ENCODE measurements at regions of chr18 and their contacts with region 1.

Region 1: GRCh38 chr18:36572135-36572856 is 256.5 kb downstream of the TPGS2 start:
- DNase-seq: peak; percentile 38
- ATAC-seq: peak; percentile 87
- H3K4me3 ChIP-seq: no peak overlapping the region
- H3K27ac ChIP-seq: no peak overlapping the region
- H3K4me1 ChIP-seq: no peaks in the 10 kb centered on the region
- H3K27me3 ChIP-seq: no peaks in the 10 kb centered on the region
- CTCF ChIP-seq: peak; percentile 55 to 74 (median 55)
- EP300 ChIP-seq: no peak
- POLR2A ChIP-seq: no peak
- RAD21 ChIP-seq: peak; percentile 76

Region 2: GRCh38 chr18:36095936-36096519 is 476.3 kb before region 1 on chr18:
- CTCF ChIA-PET with region 1: interaction called, 10 read pairs
- POLR2A ChIA-PET with region 1: no interaction called
- RAD21 ChIA-PET with region 1: interaction called, 17 read pairs
- SMC1A ChIA-PET with region 1: interaction called, 17 read pairs
- in situ Hi-C with region 1: loop called (anchors 10 kb)
- intact Hi-C with region 1: loop called (anchors 10 kb)
- DNase-seq: no peak
- ATAC-seq: peak; percentile 76
- H3K4me3 ChIP-seq: no peak overlapping the region
- H3K27ac ChIP-seq: no peak overlapping the region
- H3K4me1 ChIP-seq: no peaks in the 10 kb centered on the region
- H3K27me3 ChIP-seq: no peaks in the 10 kb centered on the region
- CTCF ChIP-seq: peak; percentile 33 to 67 (median 36); a peak in 4 of 6 replicates
- EP300 ChIP-seq: no peak
- POLR2A ChIP-seq: no peak
- RAD21 ChIP-seq: peak; percentile 83

Region 3: DNA sequence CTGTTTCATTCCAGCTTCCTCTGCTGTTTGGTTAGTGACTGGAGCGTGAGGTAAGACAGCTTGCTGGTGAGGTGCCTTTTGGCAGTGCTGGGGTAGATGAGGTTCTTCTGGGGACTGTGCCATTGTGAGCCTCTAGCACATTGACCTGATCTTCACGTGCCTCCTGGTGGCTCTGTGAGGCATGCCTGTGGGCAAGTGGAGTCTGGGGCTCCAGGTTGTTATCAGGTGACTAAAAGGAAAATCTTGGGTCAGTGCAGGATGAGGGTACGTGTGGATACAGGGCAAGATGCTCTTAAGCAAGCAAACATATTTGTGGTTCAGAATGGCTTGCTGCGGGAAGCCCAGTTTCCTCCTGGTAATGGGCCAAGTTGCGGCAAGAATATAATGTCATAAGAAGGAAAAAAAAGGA is 199.4 kb before region 1 on chr18:
- CTCF ChIA-PET with region 1: interaction called, 13 read pairs
- POLR2A ChIA-PET with region 1: interaction called, 3 read pairs
- RAD21 ChIA-PET with region 1: interaction called, 6 read pairs
- SMC1A ChIA-PET with region 1: interaction called, 32 read pairs
- in situ Hi-C with region 1: no loop called
- intact Hi-C with region 1: no loop called
- DNase-seq: no peak
- ATAC-seq: peak; percentile 57
- H3K4me3 ChIP-seq: no peak overlapping the region
- H3K27ac ChIP-seq: no peak overlapping the region
- H3K4me1 ChIP-seq: no peaks in the 10 kb centered on the region; the same call in 1 of the 2 replicates
- H3K27me3 ChIP-seq: no peaks in the 10 kb centered on the region
- CTCF ChIP-seq: peak; percentile 16 to 33 (median 32); a peak in 3 of 6 replicates
- EP300 ChIP-seq: no peak
- POLR2A ChIP-seq: no peak
- RAD21 ChIP-seq: peak; percentile 53; the same call in 1 of the 2 replicates

Region 4: GRCh38 chr18:36441426-36442240 is 130.7 kb before region 1 on chr18:
- CTCF ChIA-PET with region 1: interaction called, 27 read pairs
- POLR2A ChIA-PET with region 1: interaction called, 3 read pairs
- RAD21 ChIA-PET with region 1: interaction called, 5 read pairs
- SMC1A ChIA-PET with region 1: interaction called, 9 read pairs
- in situ Hi-C with region 1: no loop called
- intact Hi-C with region 1: no loop called
- DNase-seq: no peak
- ATAC-seq: peak; percentile 10; the same call in 2 of the 3 replicates
- H3K4me3 ChIP-seq: no peak overlapping the region
- H3K27ac ChIP-seq: no peak overlapping the region
- H3K4me1 ChIP-seq: no peaks in the 10 kb centered on the region
- H3K27me3 ChIP-seq: no peaks in the 10 kb centered on the region
- CTCF ChIP-seq: no peak
- EP300 ChIP-seq: peak in 1 of 2 experiments; percentile 16; a peak in 1 of 4 replicates
- POLR2A ChIP-seq: no peak
- RAD21 ChIP-seq: no peak

Region 5: DNA sequence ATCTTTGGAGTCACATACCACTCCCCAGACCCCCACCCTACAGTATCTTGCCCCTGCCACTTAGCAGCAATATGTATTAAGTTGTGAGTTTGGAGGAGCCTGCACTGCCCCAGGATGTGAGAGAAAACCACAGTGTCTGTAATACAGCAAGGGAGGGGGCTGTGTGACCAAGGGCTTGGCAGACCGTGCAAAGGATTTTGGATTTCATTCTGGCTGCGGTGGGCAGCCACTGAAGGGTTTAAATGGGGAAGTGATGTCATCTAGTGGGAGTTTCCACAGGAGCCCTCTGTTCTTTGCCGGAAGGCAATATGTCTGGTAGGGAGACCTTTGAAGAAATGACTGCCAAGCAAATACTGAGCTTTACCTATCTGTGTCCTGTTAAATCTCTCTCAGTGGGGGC is 72.4 kb before region 1 on chr18:
- CTCF ChIA-PET with region 1: interaction called, 23 read pairs
- POLR2A ChIA-PET with region 1: no interaction called
- RAD21 ChIA-PET with region 1: interaction called, 6 read pairs
- SMC1A ChIA-PET with region 1: interaction called, 9 read pairs
- in situ Hi-C with region 1: no loop called
- intact Hi-C with region 1: loop called (anchors 2 kb)
- DNase-seq: peak; percentile 66
- ATAC-seq: peak; percentile 96
- H3K4me3 ChIP-seq: no peak overlapping the region
- H3K27ac ChIP-seq: no peak overlapping the region
- H3K4me1 ChIP-seq: peaks cover 11% of the 10 kb centered on the region
- H3K27me3 ChIP-seq: no peaks in the 10 kb centered on the region
- CTCF ChIP-seq: no peak
- EP300 ChIP-seq: peak; percentile 27 to 54; a peak in 1 of 4 replicates
- POLR2A ChIP-seq: no peak
- RAD21 ChIP-seq: no peak

Region 6: DNA sequence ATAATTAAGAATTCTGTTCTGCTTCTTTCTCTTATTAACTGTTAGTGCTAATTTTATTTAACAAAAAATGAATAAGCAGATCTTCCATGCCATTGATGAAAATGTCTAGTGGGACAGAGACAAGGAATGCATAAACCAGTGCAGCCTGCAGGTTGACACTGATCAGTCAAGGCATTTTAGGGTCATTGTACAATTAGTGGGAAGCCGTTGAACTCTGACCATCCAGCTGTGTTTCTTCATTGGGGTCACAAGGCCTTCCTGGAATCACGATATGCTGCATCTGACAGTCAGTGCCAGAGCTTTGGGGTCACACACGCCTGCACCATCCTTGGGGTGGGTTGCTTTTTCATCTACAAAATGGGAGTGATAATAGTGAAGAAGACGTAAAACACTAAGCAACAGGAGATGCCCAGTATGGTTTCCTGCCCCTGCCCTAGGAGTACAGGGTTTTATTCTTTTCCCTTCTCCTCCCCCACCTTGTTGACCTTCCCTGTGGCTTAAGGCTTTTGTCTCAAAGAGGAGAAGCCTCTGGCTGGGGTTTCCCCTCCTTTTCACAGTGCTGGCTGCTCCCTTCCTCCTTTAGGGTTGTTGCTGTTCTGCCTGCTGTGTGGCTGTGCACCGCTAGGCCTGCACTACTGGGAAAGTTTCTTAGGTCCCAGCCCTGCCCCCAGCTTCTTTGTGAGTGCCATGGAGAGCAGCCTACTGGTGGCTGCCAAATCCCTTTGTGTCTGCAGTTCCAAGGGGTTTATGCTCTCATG is 10.9 kb after region 1 on chr18:
- CTCF ChIA-PET with region 1: interaction called, 12 read pairs
- POLR2A ChIA-PET with region 1: no interaction called
- RAD21 ChIA-PET with region 1: no interaction called
- SMC1A ChIA-PET with region 1: interaction called, 13 read pairs
- in situ Hi-C with region 1: no loop called
- intact Hi-C with region 1: no loop called
- DNase-seq: peak; percentile 17
- ATAC-seq: peak; percentile 97
- H3K4me3 ChIP-seq: no peak overlapping the region
- H3K27ac ChIP-seq: no peak overlapping the region
- H3K4me1 ChIP-seq: peaks cover 8% of the 10 kb centered on the region
- H3K27me3 ChIP-seq: no peaks in the 10 kb centered on the region
- CTCF ChIP-seq: peak; percentile 14 to 38 (median 22); a peak in 3 of 6 replicates
- EP300 ChIP-seq: no peak
- POLR2A ChIP-seq: no peak
- RAD21 ChIP-seq: 0 out of 2 replicates have a peak, but pooled peaks have one; percentile 10

Region 7: DNA sequence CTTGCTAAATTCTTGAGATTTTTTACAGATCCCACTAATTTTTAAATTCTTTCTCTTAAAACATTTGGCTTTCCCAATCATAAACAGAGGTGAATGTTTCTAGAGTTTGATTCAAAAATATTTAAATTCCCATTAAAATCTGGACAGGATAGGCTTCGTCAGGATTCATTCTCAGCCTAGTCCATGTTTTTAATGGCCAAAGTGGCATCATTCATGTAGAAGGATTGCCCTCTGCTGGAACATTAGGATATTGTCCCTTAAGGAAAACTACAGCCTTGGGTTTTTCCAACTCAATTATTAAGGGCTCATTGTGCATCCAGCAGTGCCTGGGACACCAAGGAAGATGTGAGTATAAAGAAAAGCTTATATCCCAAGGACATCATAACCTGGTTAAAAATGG is 184.8 kb after region 1 on chr18:
- CTCF ChIA-PET with region 1: no interaction called
- POLR2A ChIA-PET with region 1: no interaction called
- RAD21 ChIA-PET with region 1: no interaction called
- SMC1A ChIA-PET with region 1: no interaction called
- in situ Hi-C with region 1: no loop called
- intact Hi-C with region 1: loop called (anchors 5 kb)
- DNase-seq: no peak
- ATAC-seq: peak; percentile 48
- H3K4me3 ChIP-seq: no peak overlapping the region
- H3K27ac ChIP-seq: no peak overlapping the region
- H3K4me1 ChIP-seq: no peaks in the 10 kb centered on the region
- H3K27me3 ChIP-seq: no peaks in the 10 kb centered on the region
- CTCF ChIP-seq: peak; percentile 31 to 54 (median 38); a peak in 5 of 6 replicates
- EP300 ChIP-seq: no peak
- POLR2A ChIP-seq: no peak
- RAD21 ChIP-seq: peak; percentile 58

Measured in GM12878 (cell line).